ENCODE measurements at regions of chr14 and their contacts with region 1.

Region 1: GRCh38 chr14:30656190-30656632 is 34.1 kb downstream of the SCFD1 start:
- DNase-seq: no peak
- H3K4me3 Mint-ChIP-seq: no peak overlapping the region
- H3K27ac Mint-ChIP-seq: no peak overlapping the region
- H3K4me1 Mint-ChIP-seq: no peaks in the 10 kb centered on the region
- H3K27me3 Mint-ChIP-seq: no peaks in the 10 kb centered on the region

Region 2: GRCh38 chr14:30691751-30692398 is 35.7 kb after region 1 on chr14:
- intact Hi-C with region 1: loop called (anchors 5 kb)
- DNase-seq: no peak
- H3K4me3 Mint-ChIP-seq: no peak overlapping the region
- H3K27ac Mint-ChIP-seq: no peak overlapping the region
- H3K4me1 Mint-ChIP-seq: no peaks in the 10 kb centered on the region
- H3K27me3 Mint-ChIP-seq: no peaks in the 10 kb centered on the region

Region 3: DNA sequence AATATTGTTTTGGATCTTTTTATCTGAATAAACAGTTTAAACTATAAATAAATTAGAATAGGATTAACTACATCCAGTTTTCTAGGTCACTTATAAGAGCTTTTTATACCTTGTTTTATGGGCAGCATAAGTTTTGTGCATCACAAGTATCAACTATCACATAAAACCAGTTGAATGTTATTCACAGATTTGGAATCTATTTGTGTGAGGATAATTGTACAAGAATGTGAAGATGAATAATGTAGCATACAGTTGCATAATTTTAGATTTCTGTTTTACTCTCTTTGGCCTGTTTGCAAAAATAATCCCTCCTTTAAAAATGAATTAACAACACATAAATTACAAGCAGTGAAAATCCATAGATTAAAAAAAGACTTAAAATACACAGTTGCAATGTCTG is 54.7 kb after region 1 on chr14:
- intact Hi-C with region 1: no loop called
- DNase-seq: no peak
- H3K4me3 Mint-ChIP-seq: no peak overlapping the region
- H3K27ac Mint-ChIP-seq: no peak overlapping the region
- H3K4me1 Mint-ChIP-seq: no peaks in the 10 kb centered on the region
- H3K27me3 Mint-ChIP-seq: no peaks in the 10 kb centered on the region

Region 4: GRCh38 chr14:31084385-31084784 is 428.2 kb after region 1 on chr14:
- intact Hi-C with region 1: loop called (anchors 10 kb)
- DNase-seq: no peak
- H3K4me3 Mint-ChIP-seq: no peak overlapping the region
- H3K27ac Mint-ChIP-seq: no peak overlapping the region
- H3K4me1 Mint-ChIP-seq: no peaks in the 10 kb centered on the region
- H3K27me3 Mint-ChIP-seq: no peaks in the 10 kb centered on the region

Region 5: GRCh38 chr14:32252030-32252670 is 1595.9 kb after region 1 on chr14:
- intact Hi-C with region 1: loop called (anchors 5 kb)
- DNase-seq: peak; percentile 35
- H3K4me3 Mint-ChIP-seq: no peak overlapping the region
- H3K27ac Mint-ChIP-seq: no peak overlapping the region
- H3K4me1 Mint-ChIP-seq: no peaks in the 10 kb centered on the region
- H3K27me3 Mint-ChIP-seq: no peaks in the 10 kb centered on the region

Measured in activated T-helper 1 cell treated with anti-CD3 and anti-CD28 coated beads, Interleukin-12 subunit alpha, Interleukin-12 subunit beta, Interleukin-2, Interleukin-4 antibody, amounts not matched to agents 30 ng/mL and 10 ng/mL and 1 ng/mL, durations not matched to agents 14 hours and 24 hours and 36 hours (primary cell).